ENCODE measurements at regions of chr17 and their contacts with region 1.

Region 1: GRCh38 chr17:36691606-36692005 is 90.2 kb downstream of the MRM1 start:
- DNase-seq: no peak
- H3K4me3 ChIP-seq: no peak overlapping the region
- H3K27ac ChIP-seq: no peak overlapping the region
- H3K4me1 ChIP-seq: peaks cover 4 to 20% (median 12%) of the 10 kb centered on the region in 4 experiments
- H3K27me3 ChIP-seq: no peaks in the 10 kb centered on the region
- CTCF ChIP-seq: no peak
- EP300 ChIP-seq: no peak
- POLR2A ChIP-seq: no peak
- RAD21 ChIP-seq: no peak

Region 2: GRCh38 chr17:36657763-36658490 is 33.7 kb before region 1 on chr17:
- CTCF ChIA-PET with region 1: interaction called, 10 read pairs
- POLR2A ChIA-PET with region 1: interaction called, 3 read pairs
- DNase-seq: peak in 1 of 2 experiments; percentile 86
- H3K4me3 ChIP-seq: peak overlapping the region; percentile 44 to 81 (median 66)
- H3K27ac ChIP-seq: no peak overlapping the region
- H3K4me1 ChIP-seq: peaks cover 0 to 4% (median 3%) of the 10 kb centered on the region in 4 experiments; a peak in 3 of 7 replicates
- H3K27me3 ChIP-seq: peaks cover 0 to 10% (median 3%) of the 10 kb centered on the region in 4 experiments; a peak in 3 of 7 replicates
- CTCF ChIP-seq: peak; percentile 69 to 76 (median 74)
- EP300 ChIP-seq: 0 out of 3 replicates have a peak, but pooled peaks of 1 of the 2 experiments have one; percentile 17
- POLR2A ChIP-seq: no peak
- RAD21 ChIP-seq: peak; percentile 69 to 78